ENCODE measurements at regions of chr16 and their contacts with region 1.

Region 1: DNA sequence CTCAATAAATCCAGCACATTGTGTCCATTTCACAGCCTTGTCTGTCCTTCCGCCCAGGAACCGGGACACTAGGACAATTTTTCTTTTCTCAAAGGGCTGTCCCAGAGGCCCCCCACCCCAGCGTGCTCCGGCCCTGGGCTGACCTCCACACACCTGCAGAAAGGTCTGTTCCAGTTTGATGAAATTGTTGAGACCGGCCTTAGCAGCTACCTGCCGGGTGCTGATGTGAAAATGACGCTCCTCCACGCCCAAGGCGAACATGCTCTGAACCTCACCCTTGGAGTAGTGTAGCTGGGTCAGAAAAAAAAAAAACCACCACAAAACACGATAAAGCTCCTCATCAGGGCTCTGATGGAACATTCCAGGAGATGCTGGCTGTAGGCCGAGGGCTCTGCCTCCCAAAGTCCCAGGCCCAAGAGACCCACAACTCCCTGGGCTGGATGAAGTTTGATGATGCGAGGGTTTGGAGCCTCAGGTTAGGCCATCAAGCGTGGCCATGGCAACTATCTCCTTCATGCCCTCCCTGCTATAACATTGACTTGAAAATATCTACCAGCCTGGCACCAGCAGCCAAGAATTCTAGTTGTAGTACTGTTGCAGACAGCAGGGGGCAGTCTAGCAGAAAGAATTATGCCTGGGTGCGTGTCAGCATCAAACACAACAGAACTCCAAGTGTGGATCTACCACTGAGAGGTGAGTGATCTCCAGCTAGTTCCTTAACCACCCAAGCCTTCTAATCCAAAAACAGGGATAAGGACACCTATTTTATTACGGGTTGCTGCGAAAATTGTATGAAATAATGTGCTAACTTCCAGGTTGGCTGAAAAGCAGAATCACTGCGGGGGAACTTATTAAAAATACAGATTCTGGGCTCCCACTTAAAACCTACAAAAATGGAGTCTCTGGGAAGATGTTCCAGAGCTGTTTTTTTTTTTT is 62.1 kb downstream of the RMI2 start:
- DNase-seq: no peak
- H3K4me3 ChIP-seq: no peak overlapping the region
- CTCF ChIP-seq: peak; percentile 73

Region 2: DNA sequence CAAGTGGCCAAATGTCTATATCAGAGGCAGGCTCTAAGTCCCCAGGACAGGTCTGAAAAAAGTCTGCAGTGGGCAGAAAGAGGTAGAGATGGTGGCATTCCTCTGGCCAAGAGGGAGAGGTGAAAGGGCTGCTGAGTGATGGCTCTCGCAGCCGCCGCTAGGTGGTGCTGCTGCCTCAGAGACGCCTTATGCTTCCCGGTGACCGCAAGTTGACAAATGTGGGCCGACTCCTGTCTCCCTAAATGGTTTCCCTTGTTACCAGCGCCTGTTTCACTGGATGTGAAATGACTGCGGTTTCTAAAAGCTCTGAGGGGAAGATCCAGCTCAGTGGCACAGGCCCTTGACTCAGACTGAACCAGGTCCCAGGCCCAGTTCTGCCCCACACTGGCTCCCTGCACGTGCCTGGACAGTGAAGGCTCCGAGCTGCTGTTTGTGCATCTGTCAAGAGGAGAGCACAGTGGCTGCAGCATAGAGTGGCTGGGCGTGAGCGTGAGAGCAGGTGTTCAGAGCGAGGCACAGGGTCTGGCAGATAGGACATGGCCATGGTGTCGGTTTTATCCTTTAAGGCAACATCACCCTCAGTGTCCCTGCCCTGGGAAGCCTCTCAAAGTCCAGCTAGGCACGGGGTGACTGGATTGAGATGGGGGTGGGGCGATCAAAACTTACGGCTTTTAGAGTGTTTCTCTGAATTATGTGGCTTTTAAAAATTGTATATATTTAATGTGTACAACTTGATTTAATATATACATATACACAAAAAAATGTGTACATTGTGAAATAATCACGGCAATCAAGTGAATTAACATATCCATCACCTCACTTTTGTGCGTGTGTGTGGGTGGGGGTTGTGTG is 443.1 kb before region 1 on chr16:
- CTCF ChIA-PET with region 1: interaction called, 84 read pairs
- POLR2A ChIA-PET with region 1: no interaction called
- DNase-seq: no peak
- H3K4me3 ChIP-seq: no peak overlapping the region
- CTCF ChIP-seq: peak; percentile 95

Region 3: DNA sequence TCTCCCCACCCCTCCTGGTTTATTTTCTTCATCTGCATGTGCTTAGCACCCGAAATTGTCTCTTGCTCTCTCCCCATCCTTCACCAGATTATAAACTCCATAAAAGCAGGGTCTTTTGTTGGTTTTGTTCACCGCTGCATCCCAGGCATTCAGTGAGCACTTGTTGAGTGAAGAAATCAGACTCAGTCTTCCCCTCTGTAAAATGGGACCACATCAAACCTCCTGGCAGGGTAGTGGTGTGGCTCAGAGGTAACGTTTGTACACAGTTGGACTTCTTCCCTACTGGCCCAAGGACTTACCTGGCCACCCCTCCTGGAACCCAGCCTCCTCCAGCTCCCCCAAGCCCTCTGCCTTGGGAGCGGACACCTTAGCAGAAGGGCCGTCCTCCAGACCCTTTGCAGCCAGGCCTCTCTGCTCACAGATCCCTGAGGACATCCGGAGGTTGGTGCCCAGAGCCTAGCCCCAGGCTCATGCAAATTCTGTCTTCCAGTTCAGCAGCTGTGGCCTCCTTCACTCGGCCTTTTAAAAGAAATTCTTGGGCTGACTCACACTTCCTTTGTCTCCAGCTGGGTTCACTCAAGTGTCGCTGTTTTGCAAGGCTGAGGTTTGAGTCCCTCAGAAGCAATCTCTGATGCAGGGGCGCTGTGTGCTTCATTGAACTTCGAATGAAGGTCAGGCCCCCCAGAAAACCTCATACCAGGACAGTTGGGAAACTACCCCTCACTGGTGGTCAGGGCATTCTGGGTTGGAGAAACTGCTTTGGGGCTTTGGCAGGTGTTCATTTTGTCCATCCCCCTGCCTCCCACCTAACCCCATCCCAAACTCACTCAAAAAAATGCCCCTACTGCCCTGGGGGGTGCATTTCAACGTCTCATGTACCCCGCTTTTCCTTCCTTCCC is 78.9 kb before region 1 on chr16:
- CTCF ChIA-PET with region 1: no interaction called
- POLR2A ChIA-PET with region 1: no interaction called
- DNase-seq: peak; percentile 65
- H3K4me3 ChIP-seq: peak overlapping the region; percentile 40
- CTCF ChIP-seq: no peak

Region 4: DNA sequence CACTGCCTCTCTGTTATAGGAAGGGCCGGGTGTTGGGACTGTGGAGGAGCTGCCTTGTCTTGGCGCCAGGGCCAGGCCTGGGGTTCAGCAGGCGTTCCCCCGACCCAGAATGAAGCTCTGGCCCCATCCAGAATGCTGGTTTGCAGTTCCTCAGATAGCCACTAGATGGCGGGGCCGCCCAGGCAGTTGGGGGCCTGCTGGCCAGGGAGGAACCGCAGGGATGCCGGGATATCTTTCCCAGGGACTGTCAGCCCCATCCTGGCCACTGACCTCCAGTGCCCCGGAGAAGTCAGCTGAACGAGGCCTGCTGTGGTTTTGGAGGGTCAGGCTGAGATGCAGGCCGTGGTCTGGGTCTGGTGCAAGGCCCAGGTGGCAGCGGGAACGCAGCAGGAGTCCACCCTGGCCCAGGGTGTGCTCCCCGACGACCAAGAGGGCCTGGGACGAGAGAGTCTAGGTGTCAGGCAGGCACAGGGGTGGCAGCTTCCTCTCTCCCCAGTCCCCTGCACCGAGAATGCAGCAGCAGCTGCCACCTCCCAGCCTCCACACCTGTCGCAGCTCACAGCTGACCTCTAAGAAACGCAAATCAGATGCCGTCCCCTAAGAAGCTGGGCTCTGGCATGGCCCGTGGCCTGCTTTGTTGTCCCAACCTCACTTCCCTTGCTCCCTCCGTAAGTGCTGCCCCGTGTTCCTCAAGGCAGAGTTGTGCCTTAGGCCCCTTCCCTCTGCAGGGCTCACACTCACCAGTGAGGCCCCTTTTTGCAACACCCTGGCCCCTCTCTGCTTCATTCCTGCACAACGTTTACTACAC is 10.9 kb before region 1 on chr16:
- CTCF ChIA-PET with region 1: interaction called, 160 read pairs
- POLR2A ChIA-PET with region 1: no interaction called
- DNase-seq: no peak
- H3K4me3 ChIP-seq: no peak overlapping the region
- CTCF ChIP-seq: peak; percentile 98

Region 5: GRCh38 chr16:11423315-11424117 is 16.2 kb after region 1 on chr16:
- CTCF ChIA-PET with region 1: interaction called, 38 read pairs
- POLR2A ChIA-PET with region 1: no interaction called
- DNase-seq: no peak
- H3K4me3 ChIP-seq: no peak overlapping the region
- CTCF ChIP-seq: no peak

Region 6: DNA sequence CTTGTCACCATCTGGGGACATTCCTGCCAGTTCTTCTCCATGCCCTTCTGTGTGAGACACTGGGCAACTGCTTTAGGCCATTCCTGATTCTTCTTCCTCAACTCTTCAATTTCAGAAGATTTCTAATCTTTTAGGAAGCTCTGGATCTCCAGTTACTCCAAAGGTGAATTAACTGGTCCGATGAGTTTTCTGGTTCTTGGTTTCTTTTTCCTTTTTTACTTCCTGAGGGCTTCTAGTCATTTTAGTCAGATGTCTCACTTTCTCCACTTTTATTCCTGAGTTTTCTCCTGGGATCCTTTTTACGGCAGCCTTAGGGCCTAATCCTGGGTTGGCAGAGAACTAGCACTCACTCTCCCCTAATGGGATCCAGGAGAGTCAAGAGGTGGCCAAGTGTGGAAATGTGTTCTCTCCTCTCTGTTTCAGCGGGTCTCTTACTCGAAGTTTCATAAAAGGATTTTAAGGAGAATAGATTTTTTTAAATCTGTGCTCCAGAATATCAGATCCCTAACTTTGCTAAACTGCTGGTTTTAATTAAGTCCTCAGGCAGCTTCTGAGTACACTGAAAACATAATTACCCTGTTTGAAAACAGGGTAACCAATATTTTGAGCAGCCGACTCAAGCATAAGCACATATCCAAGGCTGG is 45.6 kb after region 1 on chr16:
- CTCF ChIA-PET with region 1: no interaction called
- POLR2A ChIA-PET with region 1: no interaction called
- DNase-seq: no peak
- H3K4me3 ChIP-seq: no peak overlapping the region
- CTCF ChIP-seq: no peak

Region 7: GRCh38 chr16:11535471-11535870 is 128.2 kb after region 1 on chr16:
- CTCF ChIA-PET with region 1: interaction called, 31 read pairs
- POLR2A ChIA-PET with region 1: no interaction called
- DNase-seq: no peak
- H3K4me3 ChIP-seq: no peak overlapping the region
- CTCF ChIP-seq: no peak

Region 8: GRCh38 chr16:11706180-11706742 is 298.9 kb after region 1 on chr16:
- CTCF ChIA-PET with region 1: interaction called, 174 read pairs
- POLR2A ChIA-PET with region 1: no interaction called
- DNase-seq: no peak
- H3K4me3 ChIP-seq: no peak overlapping the region
- CTCF ChIP-seq: no peak